Gastrocnemius medialis (tissue), 4 donors: ENCODE measurements at regions of chr7 and their contacts with region 1.

Region 1: GRCh38 chr7:151694828-151695580 is 175.3 kb upstream of the RHEB start:
- DNase-seq: peak; percentile 94 to 98
- ATAC-seq: peak; percentile 90 to 93
- H3K4me3 ChIP-seq: no peak overlapping the region
- H3K27ac ChIP-seq: peak overlapping the region; percentile 80 to 93 (median 91)
- H3K4me1 ChIP-seq: peaks cover 16 to 19% of the 10 kb centered on the region in 2 donors
- H3K27me3 ChIP-seq: no peaks in the 10 kb centered on the region
- CTCF ChIP-seq: peak in 3 of 5 experiments; percentile 7 to 59 (median 30)
- POLR2A ChIP-seq: peak; percentile 4 to 52

Region 2: GRCh38 chr7:151705636-151706276 is 10.8 kb after region 1 on chr7:
- in situ Hi-C with region 1: no loop called
- intact Hi-C with region 1: loop called (anchors 1 kb)
- DNase-seq: peak; percentile 75 to 91
- ATAC-seq: peak; percentile 73 to 83
- H3K4me3 ChIP-seq: peak overlapping the region in 1 of 4 donors; percentile 11
- H3K27ac ChIP-seq: peak overlapping the region; percentile 57 to 73 (median 69)
- H3K4me1 ChIP-seq: peaks cover 29 to 33% of the 10 kb centered on the region in 2 donors
- H3K27me3 ChIP-seq: no peaks in the 10 kb centered on the region
- CTCF ChIP-seq: peak; percentile 38 to 60 (median 53)
- POLR2A ChIP-seq: peak in 1 of 2 donors; percentile 37

Region 3: GRCh38 chr7:151744656-151745638 is 49.9 kb after region 1 on chr7:
- in situ Hi-C with region 1: loop called in 2 of 4 experiments (anchors 5 kb)
- intact Hi-C with region 1: loop called (anchors 1 kb)
- DNase-seq: peak; percentile 98 to 99
- ATAC-seq: peak; percentile 76 to 78
- H3K4me3 ChIP-seq: no peak overlapping the region
- H3K27ac ChIP-seq: peak overlapping the region; percentile 76 to 90 (median 80)
- H3K4me1 ChIP-seq: peaks cover 36% of the 10 kb centered on the region in 2 donors
- H3K27me3 ChIP-seq: no peaks in the 10 kb centered on the region
- CTCF ChIP-seq: peak in 3 of 5 experiments; percentile 22 to 67 (median 60)
- POLR2A ChIP-seq: peak; percentile 29 to 55

Region 4: DNA sequence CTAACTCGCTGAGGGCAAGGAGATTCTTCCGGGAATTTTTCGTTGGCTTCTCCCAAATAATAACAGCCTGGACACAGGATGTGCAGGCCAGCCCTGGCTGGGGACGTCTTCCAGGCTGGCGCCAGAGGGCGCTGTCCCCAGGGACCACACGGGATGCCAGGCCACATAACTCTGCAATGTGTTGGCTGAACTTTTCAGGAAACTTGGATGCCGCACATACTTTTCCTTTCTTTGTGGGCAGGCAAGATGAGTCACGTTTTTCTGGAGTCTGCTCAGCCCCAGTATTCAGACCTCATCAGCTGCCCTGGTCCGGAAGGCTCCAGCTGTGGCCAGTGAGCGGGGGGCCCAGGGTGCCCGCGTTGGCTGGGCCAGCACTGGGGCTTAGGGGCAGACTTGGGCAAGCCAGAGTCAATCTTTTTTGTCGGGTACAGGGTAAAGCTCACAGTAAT is 59.2 kb after region 1 on chr7:
- in situ Hi-C with region 1: loop called in 2 of 4 experiments (anchors 5 kb)
- intact Hi-C with region 1: no loop called
- DNase-seq: peak; percentile 76 to 86
- ATAC-seq: peak; percentile 97 to 99
- H3K4me3 ChIP-seq: no peak overlapping the region
- H3K27ac ChIP-seq: peak overlapping the region; percentile 41 to 60 (median 50)
- H3K4me1 ChIP-seq: peaks cover 17 to 20% of the 10 kb centered on the region in 2 donors
- H3K27me3 ChIP-seq: no peaks in the 10 kb centered on the region
- CTCF ChIP-seq: peak; percentile 84 to 92 (median 90)
- POLR2A ChIP-seq: no peak